ENCODE measurements at regions of chr14 and their contacts with region 1.

Region 1: DNA sequence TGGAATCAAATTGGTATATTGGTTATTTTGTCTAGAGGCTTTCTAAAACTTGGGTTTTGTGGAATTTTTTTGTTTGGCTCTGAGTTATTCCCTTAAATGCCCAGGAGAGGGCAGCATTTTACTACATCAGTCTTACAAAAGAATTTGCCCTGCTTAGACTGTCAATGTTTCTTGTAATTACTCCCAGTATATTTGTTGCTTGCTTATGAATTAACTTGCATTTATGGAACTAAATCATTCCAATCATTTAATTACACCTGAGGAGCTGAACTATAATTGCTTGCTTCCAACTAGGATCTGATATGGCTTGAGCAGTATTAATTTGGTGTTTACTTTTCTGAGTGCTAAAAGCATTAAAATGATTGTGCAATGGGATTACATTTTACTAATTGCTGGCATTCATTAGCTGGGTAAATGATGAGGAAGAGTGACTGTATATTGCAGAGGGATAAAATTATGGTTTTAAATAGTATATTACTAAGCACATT is 48.7 kb downstream of the MIPOL1 start:
- DNase-seq: no peak
- H3K4me3 ChIP-seq: no peak overlapping the region
- H3K27me3 ChIP-seq: no peaks in the 10 kb centered on the region
- CTCF ChIP-seq: peak; percentile 68

Region 2: GRCh38 chr14:37257501-37258070 is 11.1 kb after region 1 on chr14:
- CTCF ChIA-PET with region 1: interaction called, 15 read pairs
- POLR2A ChIA-PET with region 1: no interaction called
- DNase-seq: no peak
- H3K4me3 ChIP-seq: no peak overlapping the region
- H3K27me3 ChIP-seq: no peaks in the 10 kb centered on the region
- CTCF ChIP-seq: no peak

Region 3: GRCh38 chr14:37279818-37280217 is 33.3 kb after region 1 on chr14:
- CTCF ChIA-PET with region 1: no interaction called
- POLR2A ChIA-PET with region 1: no interaction called
- DNase-seq: no peak
- H3K4me3 ChIP-seq: no peak overlapping the region
- H3K27me3 ChIP-seq: no peaks in the 10 kb centered on the region
- CTCF ChIP-seq: no peak

Measured in BJ (cell line).